Activated B cell treated with CpG ODN at 0.5 μM for 24 hours (primary cell): ENCODE measurements at regions of chr7 and their contacts with region 1.

Region 1: DNA sequence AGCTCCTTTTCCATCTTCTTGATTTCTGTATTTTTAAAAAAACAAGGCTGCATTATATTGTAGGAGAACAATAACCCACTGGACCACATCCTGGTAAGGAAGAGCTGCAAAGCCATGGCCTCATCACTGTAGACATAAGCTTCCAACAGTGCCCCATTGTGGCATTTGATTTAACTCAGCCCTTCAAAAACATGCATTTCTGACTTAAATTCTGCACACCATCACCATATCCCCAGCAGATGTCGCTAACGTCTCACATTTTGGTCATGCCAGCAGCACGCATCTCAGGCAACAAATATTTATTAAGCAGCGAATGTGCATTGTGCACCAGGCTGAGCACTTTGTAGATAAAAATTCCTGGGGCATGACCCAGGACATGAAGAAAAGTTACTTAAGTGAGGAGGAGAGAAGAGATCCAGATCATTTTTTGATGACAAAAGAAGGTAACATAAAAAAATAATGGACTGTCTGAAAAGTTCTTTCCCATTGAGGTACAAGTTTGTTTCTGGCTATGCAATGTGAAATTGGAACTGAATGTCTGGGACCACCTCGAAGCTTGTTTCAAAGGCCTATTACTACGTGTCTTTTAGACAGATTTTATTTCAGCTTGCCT is 164.6 kb upstream of the CDCA7L start:
- DNase-seq: no peak
- ATAC-seq: peak; percentile 84
- H3K4me3 Mint-ChIP-seq: no peak overlapping the region
- H3K27ac Mint-ChIP-seq: no peak overlapping the region
- H3K4me1 Mint-ChIP-seq: no peaks in the 10 kb centered on the region
- H3K27me3 Mint-ChIP-seq: no peaks in the 10 kb centered on the region
- CTCF ChIP-seq: peak; percentile 59

Region 2: DNA sequence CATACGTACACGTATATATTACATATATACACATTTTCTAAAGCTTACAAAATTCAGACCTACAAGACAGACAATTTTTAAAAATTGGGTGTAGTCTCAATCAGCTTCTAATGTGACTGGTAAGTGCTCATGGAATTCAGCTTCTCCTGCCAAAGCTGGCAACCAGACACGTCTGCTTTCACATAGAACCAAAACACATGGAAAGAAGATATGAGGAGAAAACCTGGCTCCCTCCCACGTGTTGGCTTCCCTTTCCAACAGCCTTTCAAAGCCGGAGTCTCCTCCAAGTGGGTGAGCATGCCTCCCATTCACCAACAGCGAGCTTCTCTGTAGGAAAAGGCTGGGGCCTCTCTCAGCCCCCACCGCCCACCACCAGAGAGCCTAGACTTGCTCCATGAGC is 198.0 kb before region 1 on chr7:
- CTCF ChIA-PET with region 1: no interaction called
- POLR2A ChIA-PET with region 1: no interaction called
- intact Hi-C with region 1: no loop called
- DNase-seq: no peak
- ATAC-seq: no peak
- H3K4me3 Mint-ChIP-seq: no peak overlapping the region
- H3K27ac Mint-ChIP-seq: peak overlapping the region; percentile 74
- H3K4me1 Mint-ChIP-seq: peaks cover 43% of the 10 kb centered on the region
- H3K27me3 Mint-ChIP-seq: no peaks in the 10 kb centered on the region
- CTCF ChIP-seq: no peak

Region 3: GRCh38 chr7:22051886-22052673 is 58.3 kb before region 1 on chr7:
- CTCF ChIA-PET with region 1: no interaction called
- POLR2A ChIA-PET with region 1: no interaction called
- intact Hi-C with region 1: no loop called
- DNase-seq: no peak
- ATAC-seq: no peak
- H3K4me3 Mint-ChIP-seq: no peak overlapping the region
- H3K27ac Mint-ChIP-seq: no peak overlapping the region
- H3K4me1 Mint-ChIP-seq: no peaks in the 10 kb centered on the region
- H3K27me3 Mint-ChIP-seq: peaks cover 29% of the 10 kb centered on the region
- CTCF ChIP-seq: no peak

Region 4: DNA sequence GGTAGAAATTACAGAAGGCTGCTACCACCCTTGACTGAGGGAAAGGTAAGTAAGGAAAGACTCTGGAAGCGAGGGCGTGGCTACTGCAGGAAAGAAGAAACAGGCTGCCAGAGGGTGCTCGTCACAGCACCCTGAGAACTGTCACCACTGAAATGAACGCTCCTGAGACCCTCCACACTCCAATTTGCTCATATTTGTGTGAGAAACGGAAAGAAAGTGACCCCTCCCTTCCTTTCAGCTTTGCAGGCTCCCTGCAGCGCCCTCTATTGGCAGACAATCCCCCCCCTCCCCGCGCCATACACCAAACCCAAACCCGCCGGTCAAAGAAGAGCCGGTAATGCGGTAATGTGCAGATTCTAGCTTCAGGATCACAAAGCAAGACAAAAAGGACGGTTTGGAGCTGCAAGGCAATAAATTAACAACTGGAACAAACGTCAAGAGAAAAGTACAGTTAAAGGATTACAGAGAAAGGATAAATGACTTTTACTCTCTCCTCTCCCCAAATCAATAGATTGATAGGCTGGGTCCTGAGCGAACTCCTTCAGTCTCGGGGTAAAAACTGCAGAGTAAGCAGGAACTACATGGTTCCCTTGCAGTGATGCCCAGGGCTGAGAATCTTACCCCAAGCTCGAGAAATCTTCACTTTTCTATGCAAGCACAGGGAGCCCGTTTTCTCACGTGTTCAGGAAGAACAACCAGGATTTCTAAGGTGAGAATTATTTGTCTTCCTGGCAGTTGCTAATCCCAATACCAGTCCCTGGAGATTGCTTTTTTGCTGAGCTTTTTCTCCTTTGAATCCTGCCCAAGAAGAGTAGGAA is 342.0 kb after region 1 on chr7:
- CTCF ChIA-PET with region 1: interaction called, 3 read pairs
- POLR2A ChIA-PET with region 1: no interaction called
- intact Hi-C with region 1: loop called (anchors 1 kb)
- DNase-seq: peak; percentile 34
- ATAC-seq: peak; percentile 40
- H3K4me3 Mint-ChIP-seq: peak overlapping the region; percentile 35
- H3K27ac Mint-ChIP-seq: no peak overlapping the region
- H3K4me1 Mint-ChIP-seq: peaks cover 25% of the 10 kb centered on the region
- H3K27me3 Mint-ChIP-seq: peaks cover 4% of the 10 kb centered on the region
- CTCF ChIP-seq: no peak

Region 5: GRCh38 chr7:22499044-22499443 is 388.7 kb after region 1 on chr7:
- CTCF ChIA-PET with region 1: interaction called, 36 read pairs
- POLR2A ChIA-PET with region 1: no interaction called
- intact Hi-C with region 1: loop called (anchors 1 kb)
- DNase-seq: no peak
- ATAC-seq: no peak
- H3K4me3 Mint-ChIP-seq: no peak overlapping the region
- H3K27ac Mint-ChIP-seq: no peak overlapping the region
- H3K4me1 Mint-ChIP-seq: peaks cover 8% of the 10 kb centered on the region
- H3K27me3 Mint-ChIP-seq: peaks cover 7% of the 10 kb centered on the region
- CTCF ChIP-seq: no peak